Right lobe of liver (tissue), 6 donors: ENCODE measurements at regions of chr10 and their contacts with region 1.

Region 1: DNA sequence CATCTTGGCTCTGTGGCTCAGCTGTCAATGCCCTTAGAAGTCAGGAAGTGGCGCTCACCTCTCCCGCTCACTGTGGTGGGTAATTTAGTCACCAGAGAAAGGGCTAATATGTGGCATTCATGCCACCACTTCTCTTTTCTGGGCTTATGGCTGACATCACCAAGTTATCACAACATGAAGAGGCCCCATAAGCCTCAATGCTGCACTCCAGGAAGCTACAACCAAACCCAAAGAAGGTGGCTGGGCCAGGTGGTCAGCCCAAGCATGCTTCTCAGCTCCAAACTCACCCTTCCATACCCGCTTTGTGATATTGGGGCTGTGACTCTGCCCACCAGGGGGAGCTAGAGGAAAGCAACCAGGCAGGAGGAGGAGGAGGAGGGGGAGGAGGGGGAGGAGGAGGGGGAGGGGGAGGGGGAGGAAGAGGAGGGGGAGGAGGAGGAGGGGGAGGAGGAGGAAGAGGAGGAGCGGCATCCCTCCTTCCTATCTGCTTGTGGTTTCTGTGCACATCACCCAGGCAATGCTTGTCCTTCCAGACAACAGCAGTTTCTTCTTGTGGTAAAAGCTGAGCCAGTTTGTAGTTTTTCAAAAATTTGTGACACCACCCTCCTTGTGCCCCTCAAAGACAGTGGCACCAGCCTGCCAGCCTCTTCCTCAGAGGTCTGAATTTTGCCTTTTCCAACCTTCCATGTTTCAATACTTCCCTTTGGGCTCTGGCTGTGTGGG is 42.1 kb downstream of the CYP26A1 start:
- DNase-seq: peak; percentile 58 to 84 (median 67)
- ATAC-seq: peak; percentile 90 to 94 (median 92)
- H3K4me3 ChIP-seq: no peak overlapping the region
- H3K27ac ChIP-seq: no peak overlapping the region
- H3K4me1 ChIP-seq: peaks cover 0 to 7% (median 0%) of the 10 kb centered on the region in 4 donors
- H3K27me3 ChIP-seq: no peaks in the 10 kb centered on the region
- CTCF ChIP-seq: peak; percentile 38 to 58 (median 48)
- POLR2A ChIP-seq: no peak

Region 2: DNA sequence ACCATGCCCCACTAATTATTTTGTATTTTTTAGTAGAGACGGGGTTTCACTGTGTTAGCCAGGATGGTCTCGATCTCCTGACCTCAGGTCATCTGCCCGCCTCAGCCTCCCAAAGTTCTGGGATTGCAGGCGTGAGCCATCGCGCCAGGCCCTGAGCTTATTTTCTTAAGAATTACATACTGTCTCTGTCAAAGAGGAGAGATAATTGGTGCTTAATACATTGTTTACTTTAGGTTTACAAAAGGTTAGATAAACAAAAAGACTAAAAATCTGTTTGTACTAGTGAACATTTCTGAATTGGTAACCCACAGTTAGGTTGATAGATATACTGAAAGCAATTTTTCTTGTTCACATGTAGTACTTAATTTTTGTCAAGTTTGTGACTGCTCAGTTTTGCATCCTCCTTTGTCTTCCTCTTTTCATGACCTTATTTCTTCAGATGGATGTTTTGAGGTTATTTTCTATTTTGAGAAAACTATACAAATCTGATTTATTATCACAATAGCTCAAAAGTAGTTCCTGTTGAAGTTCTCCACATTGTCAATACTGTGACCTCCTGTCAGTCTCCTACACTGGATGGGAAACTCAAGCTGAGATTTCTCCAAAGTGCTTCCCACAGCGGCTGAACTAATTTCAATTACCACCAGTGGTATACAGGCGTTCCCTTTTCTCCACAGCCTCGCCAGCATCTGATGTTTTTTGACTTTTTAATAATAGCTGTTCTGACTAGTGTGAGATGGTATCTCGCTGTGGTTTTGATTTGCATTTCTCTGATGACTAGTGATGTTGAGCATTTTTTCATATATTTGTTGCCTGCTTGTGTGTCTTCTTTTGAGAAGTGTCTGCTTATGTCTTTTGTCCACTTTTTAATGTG is 403.6 kb before region 1 on chr10:
- intact Hi-C with region 1: no loop called
- DNase-seq: no peak
- ATAC-seq: peak; percentile 46 to 81 (median 58)
- H3K4me3 ChIP-seq: no peak overlapping the region
- H3K27ac ChIP-seq: no peak overlapping the region
- H3K4me1 ChIP-seq: peaks cover 0 to 23% (median 7%) of the 10 kb centered on the region in 4 donors
- H3K27me3 ChIP-seq: no peaks in the 10 kb centered on the region
- CTCF ChIP-seq: no peak
- POLR2A ChIP-seq: no peak

Region 3: GRCh38 chr10:92957223-92958010 is 158.4 kb before region 1 on chr10:
- intact Hi-C with region 1: no loop called
- DNase-seq: no peak
- ATAC-seq: no peak
- H3K4me3 ChIP-seq: no peak overlapping the region
- H3K27ac ChIP-seq: no peak overlapping the region
- H3K4me1 ChIP-seq: no peaks in the 10 kb centered on the region
- H3K27me3 ChIP-seq: no peaks in the 10 kb centered on the region
- CTCF ChIP-seq: no peak
- POLR2A ChIP-seq: no peak

Region 4: GRCh38 chr10:93352638-93353383 is 237.0 kb after region 1 on chr10:
- intact Hi-C with region 1: loop called in 1 of 2 experiments (anchors 10 kb)
- DNase-seq: no peak
- ATAC-seq: peak; percentile 35 to 69 (median 59)
- H3K4me3 ChIP-seq: no peak overlapping the region
- H3K27ac ChIP-seq: no peak overlapping the region
- H3K4me1 ChIP-seq: no peaks in the 10 kb centered on the region
- H3K27me3 ChIP-seq: no peaks in the 10 kb centered on the region
- CTCF ChIP-seq: peak; percentile 68 to 79 (median 70)
- POLR2A ChIP-seq: no peak